Astrocyte of the cerebellum (primary cell): ENCODE measurements at regions of chr5 and their contacts with region 1.

Region 1: DNA sequence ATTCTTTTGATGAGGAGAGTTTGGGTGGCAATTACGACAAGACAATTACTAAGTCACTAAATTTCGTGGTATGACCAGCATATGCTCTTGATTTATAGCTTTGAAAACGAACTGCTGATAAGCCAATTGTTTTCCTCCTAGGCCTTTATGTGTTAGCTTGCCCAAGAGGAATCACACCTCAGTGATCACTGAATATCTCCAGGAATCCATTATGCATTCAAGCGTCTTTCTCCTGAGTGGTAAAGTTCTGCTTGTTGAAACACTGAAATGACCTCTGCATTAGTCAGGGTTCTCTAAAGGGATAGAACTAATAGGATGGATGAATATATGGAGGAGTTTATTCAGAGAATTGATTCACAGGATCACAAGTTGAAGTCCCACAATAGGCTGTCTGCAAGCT is 677.7 kb upstream of the MEF2C start:
- DNase-seq: peak; percentile 74
- H3K4me3 ChIP-seq: no peak overlapping the region
- CTCF ChIP-seq: no peak

Region 2: DNA sequence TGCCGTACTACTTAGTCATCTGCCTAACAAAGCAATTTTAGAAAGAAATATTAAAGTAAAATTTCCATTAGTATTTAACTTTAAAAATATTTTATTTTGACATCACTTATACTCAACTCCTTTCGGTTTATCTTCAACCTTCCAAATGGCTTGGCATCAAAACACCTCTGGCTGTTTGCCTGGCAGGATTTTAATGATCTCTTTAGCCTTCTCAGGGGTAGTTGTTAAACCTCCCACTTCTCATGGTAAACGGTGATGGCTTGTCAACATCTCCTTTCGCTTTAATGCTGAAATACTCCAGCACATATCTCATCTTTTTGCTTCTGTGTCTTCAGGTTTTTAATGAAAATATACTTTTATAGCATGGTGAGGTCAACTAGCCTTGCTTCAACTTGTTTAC is 101.8 kb after region 1 on chr5:
- in situ Hi-C with region 1: loop called (anchors 5 kb)
- DNase-seq: no peak
- H3K4me3 ChIP-seq: no peak overlapping the region
- CTCF ChIP-seq: no peak